KBM-7 (cell line): ENCODE measurements at regions of chr18 and their contacts with region 1.

Region 1: GRCh38 chr18:39591649-39592048 is 2026.1 kb upstream of the CELF4 start:
- DNase-seq: no peak

Region 2: DNA sequence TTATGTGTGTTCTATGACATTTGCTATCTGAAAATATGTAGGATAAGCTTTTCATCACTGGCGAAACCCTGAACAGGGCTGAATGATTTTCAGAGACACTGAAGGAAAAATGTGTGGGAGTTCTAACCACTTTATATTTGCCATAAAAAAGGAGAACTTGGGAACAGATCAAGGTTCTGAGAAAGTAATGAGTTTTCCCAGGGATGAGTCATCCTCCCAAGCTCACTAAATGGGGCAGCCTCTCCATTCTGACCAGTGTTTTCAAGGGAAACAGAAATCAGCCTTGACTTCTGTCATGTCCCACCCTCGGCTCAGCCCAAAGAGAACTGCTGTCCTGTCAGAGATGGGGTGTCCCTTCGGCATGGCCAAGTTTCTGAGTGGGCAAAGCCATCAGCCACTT is 83.7 kb after region 1 on chr18:
- in situ Hi-C with region 1: loop called (anchors 25 kb)
- DNase-seq: peak; percentile 23

Region 3: DNA sequence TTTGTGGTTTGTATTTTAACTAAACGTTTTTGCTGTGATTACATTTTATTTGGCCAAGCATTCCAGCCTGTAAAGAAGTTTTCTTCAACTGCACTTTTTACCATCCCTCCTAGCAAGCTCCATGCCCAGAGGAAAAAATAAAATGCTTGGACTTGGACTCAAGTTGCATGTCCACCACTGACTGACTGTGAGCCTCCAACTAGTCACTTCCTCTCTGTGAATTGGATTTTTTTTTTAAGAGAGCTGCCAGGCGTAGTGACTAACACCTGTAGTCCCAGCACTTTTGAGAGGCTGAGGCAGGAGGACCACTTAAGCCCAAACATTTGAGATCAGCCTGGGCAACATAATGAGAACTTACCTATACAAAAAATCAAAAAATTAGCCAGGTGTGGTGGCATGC is 1178.1 kb after region 1 on chr18:
- in situ Hi-C with region 1: no loop called
- DNase-seq: no peak